Vagina (tissue), 2 donors: ENCODE measurements at regions of chr18 and their contacts with region 1.

Region 1: DNA sequence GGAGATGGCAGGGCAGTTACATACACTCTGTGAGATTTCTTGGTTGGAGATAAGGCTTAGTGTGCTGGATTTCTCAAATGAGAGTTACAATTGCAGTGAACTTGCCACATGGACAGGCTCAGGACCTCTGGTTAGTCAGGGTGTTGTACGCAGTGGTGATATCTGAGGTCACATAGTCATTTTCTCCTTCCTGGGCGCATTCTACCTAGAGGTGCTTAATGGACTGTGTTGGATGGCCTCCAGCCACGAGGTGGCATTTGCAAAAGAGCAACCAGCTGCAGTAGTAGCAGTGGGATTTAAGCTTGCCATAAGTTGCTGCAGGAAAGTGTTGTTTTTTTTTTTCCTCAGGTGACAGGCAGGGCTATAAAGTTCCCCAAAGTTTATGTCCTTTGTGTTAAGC is 173.8 kb upstream of the TMEM200C start:
- DNase-seq: no peak
- H3K4me3 ChIP-seq: no peak overlapping the region
- H3K27ac ChIP-seq: no peak overlapping the region
- H3K4me1 ChIP-seq: no peaks in the 10 kb centered on the region
- H3K27me3 ChIP-seq: no peaks in the 10 kb centered on the region
- CTCF ChIP-seq: no peak
- POLR2A ChIP-seq: no peak

Region 2: GRCh38 chr18:4146797-4147196 is 1922.3 kb before region 1 on chr18:
- intact Hi-C with region 1: loop called (anchors 5 kb)
- DNase-seq: no peak
- H3K4me3 ChIP-seq: no peak overlapping the region
- H3K27ac ChIP-seq: no peak overlapping the region
- H3K4me1 ChIP-seq: no peaks in the 10 kb centered on the region
- H3K27me3 ChIP-seq: no peaks in the 10 kb centered on the region
- CTCF ChIP-seq: no peak
- POLR2A ChIP-seq: no peak